A549 (cell line): ENCODE measurements at regions of chr15 and their contacts with region 1.

Region 1: GRCh38 chr15:74036271-74037170 is 42.0 kb downstream of the PML start:
- DNase-seq: peak; percentile 57 to 60
- ATAC-seq: peak; percentile 75 to 88; a peak in 5 of 6 replicates
- H3K4me3 ChIP-seq: no peak overlapping the region
- H3K27ac ChIP-seq: no peak overlapping the region
- H3K4me1 ChIP-seq: peaks cover 7% of the 10 kb centered on the region; the same call in 1 of the 3 replicates
- CTCF ChIP-seq: peak; percentile 46
- EP300 ChIP-seq: no peak
- POLR2A ChIP-seq: no peak
- RAD21 ChIP-seq: peak; percentile 42 to 46; a peak in 3 of 5 replicates

Region 2: GRCh38 chr15:73950831-73951561 is 85.5 kb before region 1 on chr15:
- CTCF ChIA-PET with region 1: interaction called, 15 read pairs
- POLR2A ChIA-PET with region 1: no interaction called
- DNase-seq: peak; percentile 80
- ATAC-seq: peak; percentile 94 to 99
- H3K4me3 ChIP-seq: no peak overlapping the region
- H3K27ac ChIP-seq: peak overlapping the region in 1 of 2 experiments; percentile 73; a peak in 3 of 6 replicates
- H3K4me1 ChIP-seq: no peaks in the 10 kb centered on the region
- CTCF ChIP-seq: peak; percentile 58
- EP300 ChIP-seq: no peak
- POLR2A ChIP-seq: no peak
- RAD21 ChIP-seq: peak; percentile 64 to 71

Region 3: DNA sequence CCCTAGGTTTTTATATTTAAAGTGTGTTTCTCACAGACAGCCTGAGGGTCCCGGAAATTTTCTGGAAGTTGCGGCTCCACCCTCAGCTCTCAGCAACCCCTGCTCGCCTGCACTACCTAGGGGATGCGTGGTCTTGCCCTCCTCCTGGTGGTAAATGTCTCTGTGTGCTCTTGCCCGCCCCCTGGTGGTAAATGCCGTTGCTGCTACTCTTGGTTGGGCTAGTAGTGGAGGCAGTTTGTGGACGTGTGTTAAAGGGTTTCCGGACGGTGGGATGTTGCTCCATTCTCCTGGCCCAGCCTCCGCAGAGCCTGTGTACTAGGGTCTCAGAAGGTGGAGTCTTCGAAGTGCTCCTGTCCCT is 71.8 kb before region 1 on chr15:
- CTCF ChIA-PET with region 1: interaction called, 237 read pairs
- POLR2A ChIA-PET with region 1: no interaction called
- DNase-seq: peak; percentile 66 to 82
- ATAC-seq: peak; percentile 93 to 99
- H3K4me3 ChIP-seq: no peak overlapping the region
- H3K27ac ChIP-seq: no peak overlapping the region
- H3K4me1 ChIP-seq: 0 out of 3 replicates have a peak, but pooled peaks cover 3% of the 10 kb centered on the region
- CTCF ChIP-seq: peak; percentile 66
- EP300 ChIP-seq: no peak
- POLR2A ChIP-seq: no peak
- RAD21 ChIP-seq: peak; percentile 36 to 37; a peak in 3 of 5 replicates

Region 4: DNA sequence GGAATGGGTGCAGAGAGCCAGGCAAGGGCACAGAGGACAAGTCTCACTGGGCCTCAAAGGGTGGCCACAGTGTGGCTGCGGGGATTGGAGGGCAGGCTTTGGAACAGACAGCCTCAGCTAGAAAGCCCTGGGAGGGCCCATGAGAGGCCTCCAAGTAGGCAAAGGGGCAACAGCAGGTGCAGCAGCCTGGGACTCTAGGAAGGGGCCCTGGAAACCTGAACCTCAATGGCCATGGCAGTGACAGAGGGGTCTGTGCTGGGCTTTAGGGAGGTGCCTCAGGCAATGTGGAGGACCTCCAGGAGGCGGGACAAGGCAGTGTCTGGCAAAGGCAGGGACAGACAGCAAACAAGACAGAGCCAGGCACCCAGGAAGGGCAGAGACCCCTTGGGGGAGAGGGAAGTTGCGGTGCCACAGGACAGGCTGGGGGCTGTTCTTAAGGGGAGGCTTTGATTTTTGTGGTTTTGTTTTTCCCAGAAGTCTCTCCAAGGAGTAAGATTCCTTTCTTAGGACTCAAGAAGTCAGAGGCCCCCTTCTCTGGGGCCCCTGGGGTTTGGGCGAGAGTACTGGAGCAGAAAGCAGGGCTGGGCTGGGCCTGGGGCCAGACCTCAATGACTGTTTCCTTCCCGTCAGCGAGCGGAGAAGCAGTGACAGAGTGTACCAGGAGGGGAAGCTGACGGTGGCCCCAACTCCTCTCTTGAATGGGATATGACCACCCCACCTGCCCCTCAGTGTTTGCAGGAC is 54.1 kb before region 1 on chr15:
- CTCF ChIA-PET with region 1: interaction called, 15 read pairs
- POLR2A ChIA-PET with region 1: no interaction called
- DNase-seq: no peak
- ATAC-seq: peak in 1 of 2 experiments; percentile 15; a peak in 1 of 6 replicates
- H3K4me3 ChIP-seq: no peak overlapping the region
- H3K27ac ChIP-seq: peak overlapping the region; percentile 35 to 71; a peak in 3 of 6 replicates
- H3K4me1 ChIP-seq: peaks cover 14% of the 10 kb centered on the region
- CTCF ChIP-seq: no peak
- EP300 ChIP-seq: no peak
- POLR2A ChIP-seq: no peak
- RAD21 ChIP-seq: no peak

Region 5: GRCh38 chr15:74025436-74025835 is 11.1 kb before region 1 on chr15:
- CTCF ChIA-PET with region 1: interaction called, 15 read pairs
- POLR2A ChIA-PET with region 1: no interaction called
- DNase-seq: no peak
- ATAC-seq: no peak
- H3K4me3 ChIP-seq: no peak overlapping the region
- H3K27ac ChIP-seq: no peak overlapping the region
- H3K4me1 ChIP-seq: no peaks in the 10 kb centered on the region
- CTCF ChIP-seq: no peak
- EP300 ChIP-seq: no peak
- POLR2A ChIP-seq: no peak
- RAD21 ChIP-seq: no peak

Region 6: GRCh38 chr15:74053941-74054529 is 17.5 kb after region 1 on chr15:
- CTCF ChIA-PET with region 1: interaction called, 70 read pairs
- POLR2A ChIA-PET with region 1: no interaction called
- DNase-seq: peak; percentile 56 to 64
- ATAC-seq: peak; percentile 97
- H3K4me3 ChIP-seq: no peak overlapping the region
- H3K27ac ChIP-seq: peak overlapping the region; percentile 42 to 51; a peak in 2 of 6 replicates
- H3K4me1 ChIP-seq: peaks cover 19% of the 10 kb centered on the region; the same call in 2 of the 3 replicates
- CTCF ChIP-seq: peak; percentile 55
- EP300 ChIP-seq: no peak
- POLR2A ChIP-seq: no peak
- RAD21 ChIP-seq: peak; percentile 60 to 79